Pancreas (tissue), 10 donors: ENCODE measurements at regions of chr10 and their contacts with region 1.

Region 1: GRCh38 chr10:7410862-7411670 is at the start of gene SFMBT2:
- DNase-seq: peak; percentile 39 to 80 (median 54)
- ATAC-seq: peak; percentile 67 to 81 (median 72)
- H3K4me3 ChIP-seq: peak within 1 kb of the TSS; percentile 35 to 74 (median 58)
- H3K27ac ChIP-seq: peak within 1 kb of the TSS in 2 of 4 donors; percentile 28 to 65
- H3K4me1 ChIP-seq: peaks cover 0 to 6% (median 4%) of the 10 kb centered on the region in 3 donors
- H3K27me3 ChIP-seq: peaks cover 0 to 14% (median 8%) of the 10 kb centered on the region in 4 donors
- CTCF ChIP-seq: no peak
- total RNA-seq, gene SFMBT2: 0.79 to 9.4 (median 2.5) TPM

Region 2: GRCh38 chr10:6667679-6668270 is 743.3 kb before region 1 on chr10:
- intact Hi-C with region 1: loop called in 1 of 3 experiments (anchors 10 kb)
- DNase-seq: peak in 1 of 6 donors; percentile 15
- ATAC-seq: peak in 3 of 4 donors; percentile 74 to 79 (median 77)
- H3K4me3 ChIP-seq: no peak overlapping the region
- H3K27ac ChIP-seq: no peak overlapping the region
- H3K4me1 ChIP-seq: no peaks in the 10 kb centered on the region
- H3K27me3 ChIP-seq: peaks cover 0 to 7% (median 0%) of the 10 kb centered on the region in 4 donors
- CTCF ChIP-seq: peak in 1 of 4 donors; percentile 25

Region 3: GRCh38 chr10:6918305-6918704 is 492.8 kb before region 1 on chr10:
- intact Hi-C with region 1: loop called in 1 of 3 experiments (anchors 10 kb)
- DNase-seq: peak in 2 of 6 donors; percentile 23 to 30
- ATAC-seq: peak in 2 of 4 donors; percentile 16 to 18
- H3K4me3 ChIP-seq: no peak overlapping the region
- H3K27ac ChIP-seq: no peak overlapping the region
- H3K4me1 ChIP-seq: peaks cover 0 to 5% (median 4%) of the 10 kb centered on the region in 3 donors
- H3K27me3 ChIP-seq: no peaks in the 10 kb centered on the region
- CTCF ChIP-seq: peak in 1 of 4 donors; percentile 33

Region 4: GRCh38 chr10:7260412-7260900 is 150.6 kb before region 1 on chr10:
- intact Hi-C with region 1: loop called in 2 of 3 experiments (anchors 10 kb)
- DNase-seq: peak in 3 of 6 donors; percentile 32 to 73 (median 55)
- ATAC-seq: peak; percentile 87 to 95 (median 88)
- H3K4me3 ChIP-seq: no peak overlapping the region
- H3K27ac ChIP-seq: no peak overlapping the region
- H3K4me1 ChIP-seq: peaks cover 0 to 3% (median 0%) of the 10 kb centered on the region in 3 donors
- H3K27me3 ChIP-seq: no peaks in the 10 kb centered on the region
- CTCF ChIP-seq: peak; percentile 22 to 55 (median 40)

Region 5: GRCh38 chr10:7337431-7338171 is 73.5 kb before region 1 on chr10:
- intact Hi-C with region 1: no loop called
- DNase-seq: no peak
- ATAC-seq: no peak
- H3K4me3 ChIP-seq: no peak overlapping the region
- H3K27ac ChIP-seq: no peak overlapping the region
- H3K4me1 ChIP-seq: no peaks in the 10 kb centered on the region
- H3K27me3 ChIP-seq: no peaks in the 10 kb centered on the region
- CTCF ChIP-seq: no peak

Region 6: GRCh38 chr10:7696545-7696944 is 285.5 kb after region 1 on chr10:
- intact Hi-C with region 1: no loop called
- DNase-seq: peak; percentile 48 to 82 (median 74)
- ATAC-seq: peak; percentile 84 to 94 (median 92)
- H3K4me3 ChIP-seq: no peak overlapping the region
- H3K27ac ChIP-seq: peak overlapping the region; percentile 61 to 71 (median 66)
- H3K4me1 ChIP-seq: no peaks in the 10 kb centered on the region
- H3K27me3 ChIP-seq: no peaks in the 10 kb centered on the region
- CTCF ChIP-seq: no peak

Region 7: GRCh38 chr10:7722927-7723529 is 312.0 kb after region 1 on chr10:
- intact Hi-C with region 1: no loop called
- DNase-seq: no peak
- ATAC-seq: no peak
- H3K4me3 ChIP-seq: no peak overlapping the region
- H3K27ac ChIP-seq: no peak overlapping the region
- H3K4me1 ChIP-seq: no peaks in the 10 kb centered on the region
- H3K27me3 ChIP-seq: no peaks in the 10 kb centered on the region
- CTCF ChIP-seq: no peak

Region 8: DNA sequence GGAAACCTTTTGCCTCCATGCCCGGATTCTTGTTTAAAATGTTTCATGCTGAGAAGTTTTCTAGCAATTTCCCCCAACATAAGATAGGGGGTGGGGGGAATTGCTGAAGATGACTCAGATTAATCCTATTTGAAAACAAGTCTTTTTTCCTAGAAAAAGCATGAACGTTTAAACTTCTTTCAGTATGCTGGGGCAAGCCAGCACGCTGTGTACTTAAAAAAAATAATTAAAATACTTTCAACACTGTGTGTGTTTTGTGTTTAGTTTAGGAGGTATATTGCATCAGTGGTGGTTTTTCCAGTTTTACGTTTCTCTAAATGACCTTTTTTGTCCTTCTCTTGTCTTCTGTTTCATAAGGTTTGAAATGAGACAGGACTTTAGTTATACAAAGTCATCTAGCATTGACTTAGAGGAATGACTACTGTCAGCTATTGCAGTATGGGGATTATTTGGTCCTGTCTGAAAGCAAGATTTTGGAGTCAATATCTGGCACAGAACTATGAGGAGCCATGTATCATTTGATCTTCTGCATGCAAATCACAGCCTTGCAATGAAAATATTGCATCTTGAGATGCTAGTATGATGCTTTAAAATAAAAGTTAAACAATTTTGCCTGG is 939.4 kb after region 1 on chr10:
- intact Hi-C with region 1: no loop called
- DNase-seq: no peak
- ATAC-seq: no peak
- H3K4me3 ChIP-seq: no peak overlapping the region
- H3K27ac ChIP-seq: no peak overlapping the region
- H3K4me1 ChIP-seq: no peaks in the 10 kb centered on the region
- H3K27me3 ChIP-seq: no peaks in the 10 kb centered on the region
- CTCF ChIP-seq: no peak